ENCODE measurements at regions of chr13 and their contacts with region 1.

Region 1: DNA sequence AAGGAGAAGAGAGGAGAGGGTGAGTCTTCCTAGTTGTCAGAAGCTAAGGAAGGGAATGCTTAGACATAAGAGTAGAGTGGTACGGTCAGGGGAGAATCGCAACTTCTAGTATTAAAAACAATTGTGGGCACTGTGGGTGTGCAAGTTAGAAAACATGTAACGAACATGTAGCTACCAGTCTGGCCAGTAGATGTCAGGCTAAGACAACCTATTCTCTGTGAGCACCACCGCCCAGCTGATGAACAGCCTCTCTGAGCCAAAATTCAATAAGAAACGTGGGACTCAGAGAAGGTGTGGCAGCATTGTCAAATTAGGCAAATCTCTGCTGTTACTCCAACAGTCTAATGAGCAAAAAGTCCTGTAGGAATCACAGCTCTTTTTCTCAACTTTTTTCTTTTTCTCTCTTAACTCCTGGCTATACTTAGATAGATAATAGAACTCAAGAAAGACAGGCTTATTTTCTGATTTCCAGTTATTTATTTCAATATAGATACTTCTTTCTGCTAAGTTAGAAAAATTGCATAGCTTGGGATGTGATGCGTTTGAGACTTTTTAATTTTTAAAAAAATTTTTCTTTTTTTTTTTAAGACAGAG is 186.2 kb downstream of the USP12 start:
- DNase-seq: peak; percentile 66 to 72 (median 70)
- H3K4me3 ChIP-seq: no peak overlapping the region
- H3K4me3 Mint-ChIP-seq: no peak overlapping the region
- H3K27ac ChIP-seq: no peak overlapping the region
- H3K27ac Mint-ChIP-seq: no peak overlapping the region
- H3K4me1 ChIP-seq: no peaks in the 10 kb centered on the region
- H3K4me1 Mint-ChIP-seq: peaks cover 0 to 2% (median 0%) of the 10 kb centered on the region in 4 donors
- H3K27me3 ChIP-seq: no peaks in the 10 kb centered on the region
- H3K27me3 Mint-ChIP-seq: peaks cover 9 to 13% of the 10 kb centered on the region in 2 donors

Region 2: GRCh38 chr13:26971990-26972887 is 13.1 kb before region 1 on chr13:
- CTCF ChIA-PET with region 1: interaction called, 11 read pairs
- POLR2A ChIA-PET with region 1: no interaction called
- intact Hi-C with region 1: no loop called
- DNase-seq: peak in 3 of 5 donors; percentile 11 to 16 (median 15)
- H3K4me3 ChIP-seq: no peak overlapping the region
- H3K4me3 Mint-ChIP-seq: peak overlapping the region in 1 of 8 donors; percentile 24
- H3K27ac ChIP-seq: no peak overlapping the region
- H3K27ac Mint-ChIP-seq: peak overlapping the region in 5 of 7 donors; percentile 20 to 85 (median 36)
- H3K4me1 ChIP-seq: peaks cover 3% of the 10 kb centered on the region
- H3K4me1 Mint-ChIP-seq: peaks cover 0 to 8% (median 6%) of the 10 kb centered on the region in 4 donors
- H3K27me3 ChIP-seq: no peaks in the 10 kb centered on the region
- H3K27me3 Mint-ChIP-seq: peaks cover 0 to 12% of the 10 kb centered on the region in 2 donors

Region 3: GRCh38 chr13:27203854-27204253 is 218.5 kb after region 1 on chr13:
- CTCF ChIA-PET with region 1: interaction called, 15 read pairs
- POLR2A ChIA-PET with region 1: no interaction called
- intact Hi-C with region 1: no loop called
- DNase-seq: peak in 1 of 5 donors; percentile 2
- H3K4me3 ChIP-seq: no peak overlapping the region
- H3K4me3 Mint-ChIP-seq: no peak overlapping the region
- H3K27ac ChIP-seq: no peak overlapping the region
- H3K27ac Mint-ChIP-seq: no peak overlapping the region
- H3K4me1 ChIP-seq: no peaks in the 10 kb centered on the region
- H3K4me1 Mint-ChIP-seq: no peaks in the 10 kb centered on the region
- H3K27me3 ChIP-seq: no peaks in the 10 kb centered on the region
- H3K27me3 Mint-ChIP-seq: peaks cover 3% of the 10 kb centered on the region in 2 donors

Region 4: DNA sequence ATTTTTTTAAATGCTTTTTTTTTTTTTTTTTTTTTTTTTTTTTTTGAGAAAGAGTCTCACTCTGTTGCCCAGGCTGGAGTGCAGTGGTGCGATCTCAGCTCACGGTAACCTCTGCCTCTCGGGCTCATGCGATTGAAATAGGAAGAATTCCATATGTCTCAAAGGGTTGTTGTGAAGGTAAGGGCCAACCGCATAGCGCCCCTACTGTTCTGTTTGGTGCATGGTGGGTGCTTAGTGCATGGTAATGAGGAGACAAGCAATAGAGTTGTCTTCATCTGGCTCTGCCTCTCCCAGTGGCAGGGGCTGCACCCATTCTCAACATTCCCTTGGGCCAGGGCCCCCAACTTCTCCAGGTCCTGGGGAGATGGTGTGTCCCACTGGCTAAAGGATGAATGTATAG is 353.9 kb after region 1 on chr13:
- CTCF ChIA-PET with region 1: interaction called, 10 read pairs
- POLR2A ChIA-PET with region 1: no interaction called
- intact Hi-C with region 1: no loop called
- DNase-seq: peak in 4 of 5 donors; percentile 11 to 33 (median 28)
- H3K4me3 ChIP-seq: no peak overlapping the region
- H3K4me3 Mint-ChIP-seq: no peak overlapping the region
- H3K27ac ChIP-seq: no peak overlapping the region
- H3K27ac Mint-ChIP-seq: no peak overlapping the region
- H3K4me1 ChIP-seq: no peaks in the 10 kb centered on the region
- H3K4me1 Mint-ChIP-seq: peaks cover 0 to 4% (median 1%) of the 10 kb centered on the region in 4 donors
- H3K27me3 ChIP-seq: no peaks in the 10 kb centered on the region
- H3K27me3 Mint-ChIP-seq: peaks cover 6 to 21% of the 10 kb centered on the region in 2 donors

Region 5: GRCh38 chr13:27374650-27375049 is 389.3 kb after region 1 on chr13:
- CTCF ChIA-PET with region 1: interaction called, 16 read pairs
- POLR2A ChIA-PET with region 1: no interaction called
- intact Hi-C with region 1: no loop called
- DNase-seq: peak; percentile 46 to 56 (median 49)
- H3K4me3 ChIP-seq: no peak overlapping the region
- H3K4me3 Mint-ChIP-seq: no peak overlapping the region
- H3K27ac ChIP-seq: no peak overlapping the region
- H3K27ac Mint-ChIP-seq: no peak overlapping the region
- H3K4me1 ChIP-seq: no peaks in the 10 kb centered on the region
- H3K4me1 Mint-ChIP-seq: peaks cover 2 to 10% (median 5%) of the 10 kb centered on the region in 4 donors
- H3K27me3 ChIP-seq: no peaks in the 10 kb centered on the region
- H3K27me3 Mint-ChIP-seq: peaks cover 12 to 22% of the 10 kb centered on the region in 2 donors